IMR-90 (cell line): ENCODE measurements at regions of chr1 and their contacts with region 1.

Region 1: DNA sequence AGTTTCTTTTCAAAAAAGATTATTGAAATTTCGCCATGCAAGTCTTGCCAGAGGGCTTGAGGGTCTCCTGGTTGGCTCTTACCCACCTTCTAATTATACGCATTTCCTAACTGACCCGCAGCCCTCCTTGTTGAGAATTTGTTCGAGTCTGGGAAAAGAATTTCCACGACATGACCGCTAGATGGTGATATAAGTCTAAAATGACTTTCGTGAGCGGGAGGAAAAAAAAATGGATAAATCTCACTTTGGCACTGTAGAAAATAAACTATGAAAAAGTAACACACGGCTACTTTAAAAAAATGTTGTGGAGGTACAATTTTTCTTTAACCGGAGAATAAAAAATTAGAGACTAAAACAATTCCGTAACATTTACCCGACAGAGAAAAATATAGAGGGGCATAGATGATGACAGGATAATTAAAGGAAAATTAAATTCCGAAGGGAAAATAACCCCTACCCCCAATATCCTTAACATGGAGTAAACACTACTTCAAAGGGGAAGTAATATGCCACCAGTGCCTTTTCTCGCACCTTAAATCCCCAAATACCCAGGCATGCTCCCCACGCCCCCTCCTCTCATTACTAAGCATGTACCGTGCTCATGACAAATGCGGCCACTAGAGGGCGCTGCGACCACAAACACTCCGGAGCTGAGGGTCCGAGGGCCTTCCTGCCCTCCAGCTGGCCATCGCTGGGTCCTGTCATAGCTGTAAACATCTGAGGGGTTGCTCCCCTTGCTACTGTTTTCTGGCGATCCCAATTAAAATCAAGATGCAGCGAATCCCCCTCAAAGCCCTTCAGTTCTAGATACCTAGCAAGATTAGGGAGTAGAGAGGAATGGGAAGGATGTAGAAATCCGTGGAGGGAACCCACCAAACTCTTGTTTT is 266.9 kb downstream of the ASTN1 start:
- DNase-seq: peak; percentile 61
- ATAC-seq: peak; percentile 91
- H3K4me3 ChIP-seq: no peak overlapping the region
- H3K27ac ChIP-seq: no peak overlapping the region
- H3K4me1 ChIP-seq: no peaks in the 10 kb centered on the region
- H3K27me3 ChIP-seq: no peaks in the 10 kb centered on the region
- CTCF ChIP-seq: peak; percentile 77
- POLR2A ChIP-seq: no peak
- RAD21 ChIP-seq: peak; percentile 77

Region 2: DNA sequence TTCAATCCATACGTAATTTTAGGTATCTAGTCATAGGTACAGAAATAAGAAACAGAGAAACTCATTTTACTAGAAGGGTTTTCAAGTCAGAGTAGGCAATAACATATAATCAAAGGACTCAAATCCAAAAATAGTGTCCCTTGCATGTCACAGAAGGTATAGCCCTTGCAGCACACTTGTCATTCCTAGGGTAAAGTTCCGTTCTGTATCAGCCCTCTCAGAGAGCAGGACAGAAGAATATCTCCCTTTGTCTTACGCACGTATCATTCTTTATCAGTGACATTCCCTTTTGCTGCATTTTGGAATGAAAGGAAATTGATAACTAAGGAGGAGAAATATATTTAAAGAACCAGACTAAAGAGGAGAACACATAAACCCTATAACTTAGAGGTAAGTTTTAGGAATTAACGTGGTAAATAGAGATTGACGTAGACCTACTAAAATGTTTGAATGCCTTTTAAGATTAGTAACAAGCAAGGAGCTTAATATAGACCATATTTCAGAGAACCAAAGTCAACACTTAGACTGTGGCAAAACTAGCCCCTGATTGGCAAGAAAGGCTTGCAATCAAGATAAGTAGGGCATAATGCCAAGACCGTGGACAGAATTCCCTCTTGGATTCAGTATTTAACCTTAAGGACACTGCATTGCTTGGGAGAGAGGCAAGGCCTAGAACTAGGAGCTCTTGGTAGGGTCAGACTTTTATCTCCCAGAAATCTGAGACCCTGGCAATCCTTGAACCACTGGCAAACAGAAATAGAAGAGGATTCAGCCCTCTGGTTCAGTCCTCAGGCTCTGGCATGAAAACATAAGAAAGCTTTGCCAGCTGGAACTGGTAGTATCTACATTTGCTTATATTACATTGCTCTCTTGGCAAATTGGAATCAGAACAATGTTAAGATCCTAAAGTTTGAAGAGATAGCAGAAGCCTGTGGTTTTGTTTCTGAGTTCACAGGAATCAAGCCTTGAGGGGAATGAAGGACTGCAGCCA is 34.8 kb after region 1 on chr1:
- CTCF ChIA-PET with region 1: no interaction called
- POLR2A ChIA-PET with region 1: no interaction called
- dilution Hi-C with region 1: no loop called
- in situ Hi-C with region 1: no loop called
- intact Hi-C with region 1: no loop called
- DNase-seq: no peak
- ATAC-seq: no peak
- H3K4me3 ChIP-seq: no peak overlapping the region
- H3K27ac ChIP-seq: no peak overlapping the region
- H3K4me1 ChIP-seq: no peaks in the 10 kb centered on the region
- H3K27me3 ChIP-seq: no peaks in the 10 kb centered on the region
- CTCF ChIP-seq: no peak
- POLR2A ChIP-seq: no peak
- RAD21 ChIP-seq: no peak

Region 3: GRCh38 chr1:177181631-177182291 is 284.2 kb after region 1 on chr1:
- CTCF ChIA-PET with region 1: interaction called, 3 read pairs
- POLR2A ChIA-PET with region 1: no interaction called
- dilution Hi-C with region 1: no loop called
- in situ Hi-C with region 1: no loop called
- intact Hi-C with region 1: loop called (anchors 1 kb)
- DNase-seq: peak; percentile 29
- ATAC-seq: peak; percentile 99
- H3K4me3 ChIP-seq: 0 out of 2 replicates have a peak overlapping the region, but pooled peaks have one; percentile 9
- H3K27ac ChIP-seq: no peak overlapping the region
- H3K4me1 ChIP-seq: no peaks in the 10 kb centered on the region
- H3K27me3 ChIP-seq: peaks cover 15% of the 10 kb centered on the region
- CTCF ChIP-seq: peak; percentile 69
- POLR2A ChIP-seq: no peak
- RAD21 ChIP-seq: peak; percentile 57

Region 4: DNA sequence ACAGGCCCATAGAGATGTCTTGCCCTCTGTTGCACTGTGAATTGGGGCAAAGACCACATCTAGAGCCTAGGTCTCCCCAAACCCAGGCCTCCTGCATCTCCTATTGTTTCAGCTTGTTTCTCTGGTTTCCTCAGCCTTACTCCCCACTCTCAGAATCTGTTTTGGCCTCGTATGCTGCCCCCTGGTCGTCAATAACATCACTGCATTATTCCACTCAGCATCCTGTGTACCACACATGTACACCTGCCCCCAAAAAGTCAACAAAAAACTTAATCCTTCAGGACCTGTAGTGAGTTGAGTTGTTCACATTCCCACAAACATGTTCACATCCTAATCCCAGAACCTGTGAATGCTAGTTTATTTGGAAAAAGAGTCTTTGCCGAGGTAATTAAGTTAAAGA is 458.0 kb after region 1 on chr1:
- CTCF ChIA-PET with region 1: interaction called, 10 read pairs
- POLR2A ChIA-PET with region 1: no interaction called
- dilution Hi-C with region 1: no loop called
- in situ Hi-C with region 1: no loop called
- intact Hi-C with region 1: loop called (anchors 1 kb)
- DNase-seq: peak; percentile 19
- ATAC-seq: peak; percentile 79
- H3K4me3 ChIP-seq: no peak overlapping the region
- H3K27ac ChIP-seq: no peak overlapping the region
- H3K4me1 ChIP-seq: no peaks in the 10 kb centered on the region
- H3K27me3 ChIP-seq: peaks cover 2% of the 10 kb centered on the region; the same call in 1 of the 2 replicates
- CTCF ChIP-seq: peak; percentile 48
- POLR2A ChIP-seq: no peak
- RAD21 ChIP-seq: peak; percentile 54

Region 5: GRCh38 chr1:177780096-177780700 is 882.6 kb after region 1 on chr1:
- CTCF ChIA-PET with region 1: no interaction called
- POLR2A ChIA-PET with region 1: no interaction called
- dilution Hi-C with region 1: no loop called
- in situ Hi-C with region 1: no loop called
- intact Hi-C with region 1: loop called (anchors 5 kb)
- DNase-seq: peak; percentile 57
- ATAC-seq: peak; percentile 74
- H3K4me3 ChIP-seq: no peak overlapping the region
- H3K27ac ChIP-seq: no peak overlapping the region
- H3K4me1 ChIP-seq: no peaks in the 10 kb centered on the region
- H3K27me3 ChIP-seq: no peaks in the 10 kb centered on the region
- CTCF ChIP-seq: peak; percentile 48
- POLR2A ChIP-seq: no peak
- RAD21 ChIP-seq: peak; percentile 47

Region 6: GRCh38 chr1:177913762-177914540 is 1016.4 kb after region 1 on chr1:
- CTCF ChIA-PET with region 1: interaction called, 4 read pairs
- POLR2A ChIA-PET with region 1: no interaction called
- dilution Hi-C with region 1: no loop called
- in situ Hi-C with region 1: no loop called
- intact Hi-C with region 1: loop called (anchors 1 kb)
- DNase-seq: peak; percentile 63
- ATAC-seq: peak; percentile 92
- H3K4me3 ChIP-seq: no peak overlapping the region
- H3K27ac ChIP-seq: no peak overlapping the region
- H3K4me1 ChIP-seq: peaks cover 5% of the 10 kb centered on the region; the same call in 1 of the 2 replicates
- H3K27me3 ChIP-seq: no peaks in the 10 kb centered on the region; the same call in 1 of the 2 replicates
- CTCF ChIP-seq: peak; percentile 67
- POLR2A ChIP-seq: no peak
- RAD21 ChIP-seq: peak; percentile 77

Region 7: GRCh38 chr1:178273707-178274410 is 1376.3 kb after region 1 on chr1:
- CTCF ChIA-PET with region 1: no interaction called
- POLR2A ChIA-PET with region 1: no interaction called
- dilution Hi-C with region 1: no loop called
- in situ Hi-C with region 1: no loop called
- intact Hi-C with region 1: loop called (anchors 10 kb)
- DNase-seq: peak; percentile 52
- ATAC-seq: no peak
- H3K4me3 ChIP-seq: no peak overlapping the region
- H3K27ac ChIP-seq: no peak overlapping the region
- H3K4me1 ChIP-seq: peaks cover 9% of the 10 kb centered on the region
- H3K27me3 ChIP-seq: no peaks in the 10 kb centered on the region
- CTCF ChIP-seq: no peak
- POLR2A ChIP-seq: no peak
- RAD21 ChIP-seq: no peak